SK-N-SH (cell line): ENCODE measurements at regions of chr4 and their contacts with region 1.

Region 1: GRCh38 chr4:94621491-94622080 is 136.2 kb upstream of the BMPR1B start:
- DNase-seq: peak; percentile 37
- H3K4me3 ChIP-seq: no peak overlapping the region; a peak in 1 of 4 replicates
- H3K27ac ChIP-seq: peak overlapping the region in 1 of 2 experiments; percentile 14; a peak in 1 of 4 replicates
- H3K4me1 ChIP-seq: no peaks in the 10 kb centered on the region
- H3K27me3 ChIP-seq: no peaks in the 10 kb centered on the region
- CTCF ChIP-seq: peak; percentile 89
- EP300 ChIP-seq: no peak
- RAD21 ChIP-seq: peak; percentile 93

Region 2: GRCh38 chr4:94732358-94732698 is 110.7 kb after region 1 on chr4:
- CTCF ChIA-PET with region 1: interaction called, 14 read pairs
- POLR2A ChIA-PET with region 1: no interaction called
- DNase-seq: no peak
- H3K4me3 ChIP-seq: no peak overlapping the region
- H3K27ac ChIP-seq: no peak overlapping the region
- H3K4me1 ChIP-seq: no peaks in the 10 kb centered on the region; a peak in 2 of 4 replicates
- H3K27me3 ChIP-seq: no peaks in the 10 kb centered on the region
- CTCF ChIP-seq: no peak
- EP300 ChIP-seq: no peak
- RAD21 ChIP-seq: no peak

Region 3: DNA sequence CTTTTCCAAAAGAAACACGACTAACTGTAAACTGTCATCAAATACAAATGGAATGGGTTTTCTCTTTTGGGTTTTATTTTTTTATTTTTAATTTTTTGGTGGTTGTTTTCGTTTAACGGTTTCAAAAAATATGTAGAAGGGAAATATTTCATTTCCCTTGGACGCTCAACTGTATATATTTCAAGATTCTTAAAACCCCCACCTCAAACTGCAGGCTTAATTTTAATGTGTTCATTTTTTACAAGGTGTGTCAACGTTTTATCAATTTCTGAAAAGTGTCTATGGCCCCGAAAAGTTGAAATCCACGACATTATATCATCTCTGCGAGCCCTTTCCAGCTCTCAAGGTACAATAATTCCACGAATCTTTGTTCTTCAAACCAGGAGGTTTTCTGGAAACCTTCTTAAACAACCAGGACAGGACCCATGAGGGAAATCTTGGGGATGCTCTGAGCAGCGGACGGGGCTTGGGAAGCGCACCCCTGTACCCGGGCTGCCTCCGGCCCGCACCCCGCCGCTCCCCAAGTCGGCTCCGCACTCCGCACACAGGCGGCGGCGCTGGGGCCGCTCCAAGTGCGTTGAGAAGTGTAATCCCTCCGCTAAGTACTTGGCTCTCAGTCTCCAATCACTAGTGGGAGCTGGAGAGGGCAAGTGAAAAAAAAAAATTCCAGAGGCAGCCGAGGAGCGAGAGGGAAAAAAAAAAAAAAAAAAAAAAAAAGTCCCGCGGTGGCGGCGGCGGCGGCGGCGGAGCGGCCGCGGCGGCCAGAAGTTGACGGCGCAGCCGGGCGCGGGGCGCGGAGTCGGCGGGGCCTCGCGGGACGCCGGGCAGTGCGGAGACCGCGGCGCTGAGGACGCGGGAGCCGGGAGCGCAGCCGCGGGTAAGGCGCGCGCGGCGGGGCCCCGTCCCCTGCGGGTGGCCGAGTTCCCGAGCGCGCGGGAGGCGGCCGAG is 135.9 kb after region 1 on chr4 and contains the start of gene BMPR1B:
- CTCF ChIA-PET with region 1: interaction called, 18 read pairs
- POLR2A ChIA-PET with region 1: interaction called, 3 read pairs
- DNase-seq: peak; percentile 82
- H3K4me3 ChIP-seq: peak within 1 kb of the TSS; percentile 65
- H3K27ac ChIP-seq: peak within 1 kb of the TSS in 1 of 2 experiments; percentile 86; a peak in 2 of 4 replicates
- H3K4me1 ChIP-seq: peaks cover 0 to 8% of the 10 kb centered on the region in 2 experiments; a peak in 2 of 4 replicates
- H3K27me3 ChIP-seq: peaks cover 24% of the 10 kb centered on the region; the same call in 1 of the 2 replicates
- CTCF ChIP-seq: peak; percentile 10; the same call in 1 of the 2 replicates
- EP300 ChIP-seq: no peak
- RAD21 ChIP-seq: peak; percentile 45; the same call in 1 of the 2 replicates
- polyA plus RNA-seq, gene BMPR1B: 0.16 and 0.26 TPM in 2 replicates

Region 4: DNA sequence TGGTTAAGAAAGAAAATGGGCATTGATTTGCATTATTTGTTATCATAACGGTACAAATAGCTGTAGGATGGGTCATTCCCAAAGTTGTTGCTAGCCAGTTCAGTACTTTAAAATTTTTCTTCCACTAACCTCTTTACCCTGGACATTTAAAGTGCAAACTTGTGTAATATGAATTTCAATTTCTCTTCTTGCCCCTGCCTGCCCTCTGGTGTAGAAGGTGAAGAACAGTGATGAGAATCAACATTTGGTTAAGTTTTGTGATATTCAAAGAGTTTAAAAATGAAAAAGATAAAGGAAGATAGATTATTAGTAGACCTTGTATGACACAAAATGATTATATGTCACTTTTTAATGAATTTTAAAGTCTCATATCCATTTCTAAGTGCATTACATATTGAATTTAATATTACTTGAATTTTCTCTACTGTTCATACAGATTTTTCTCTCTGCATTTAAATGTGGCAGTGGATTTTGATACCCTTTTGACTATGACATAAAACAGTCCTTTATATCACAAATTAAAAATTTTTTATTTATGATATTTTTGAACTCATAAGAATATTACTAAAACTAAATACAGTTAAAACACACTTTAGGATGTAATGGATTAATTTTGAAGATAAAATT is 473.9 kb after region 1 on chr4:
- CTCF ChIA-PET with region 1: interaction called, 26 read pairs
- POLR2A ChIA-PET with region 1: no interaction called
- DNase-seq: peak; percentile 30
- H3K4me3 ChIP-seq: peak overlapping the region in 1 of 2 experiments; percentile 23; a peak in 1 of 4 replicates
- H3K27ac ChIP-seq: peak overlapping the region in 1 of 2 experiments; percentile 16; a peak in 1 of 4 replicates
- H3K4me1 ChIP-seq: peaks cover 0 to 2% of the 10 kb centered on the region in 2 experiments; a peak in 2 of 4 replicates
- H3K27me3 ChIP-seq: no peaks in the 10 kb centered on the region
- CTCF ChIP-seq: peak; percentile 84
- EP300 ChIP-seq: no peak
- RAD21 ChIP-seq: peak; percentile 93

Region 5: DNA sequence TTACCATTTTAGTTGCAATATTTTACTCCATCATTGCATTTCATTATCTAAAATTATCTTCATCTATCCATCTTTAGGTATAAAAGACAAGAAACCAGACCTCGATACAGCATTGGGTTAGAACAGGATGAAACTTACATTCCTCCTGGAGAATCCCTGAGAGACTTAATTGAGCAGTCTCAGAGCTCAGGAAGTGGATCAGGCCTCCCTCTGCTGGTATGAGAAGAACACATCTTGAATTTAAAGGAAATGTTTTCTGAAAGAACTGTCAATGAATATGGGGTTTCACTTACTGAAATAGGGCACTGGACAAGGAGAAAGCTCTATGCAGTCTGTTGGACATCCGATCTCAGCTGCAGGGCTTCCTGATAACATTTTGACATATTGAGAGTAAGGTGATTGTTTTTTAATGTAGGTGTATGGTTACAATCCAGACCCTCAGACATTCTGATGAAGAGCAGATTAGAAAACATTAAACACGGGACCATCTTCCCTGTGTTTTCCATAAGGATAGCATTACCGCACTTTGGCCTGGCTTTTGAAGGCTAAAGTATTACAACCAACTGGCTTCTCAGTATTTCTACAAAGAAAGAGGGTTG is 503.4 kb after region 1 on chr4:
- CTCF ChIA-PET with region 1: interaction called, 28 read pairs
- POLR2A ChIA-PET with region 1: no interaction called
- DNase-seq: peak; percentile 36
- H3K4me3 ChIP-seq: no peak overlapping the region
- H3K27ac ChIP-seq: peak overlapping the region in 1 of 2 experiments; percentile 53; a peak in 2 of 4 replicates
- H3K4me1 ChIP-seq: peaks cover 0 to 9% of the 10 kb centered on the region in 2 experiments; a peak in 2 of 4 replicates
- H3K27me3 ChIP-seq: no peaks in the 10 kb centered on the region
- CTCF ChIP-seq: peak; percentile 74
- EP300 ChIP-seq: peak in 1 of 2 experiments; percentile 30; a peak in 1 of 4 replicates
- RAD21 ChIP-seq: peak; percentile 78